ENCODE measurements at regions of chr3 and their contacts with region 1.

Region 1: DNA sequence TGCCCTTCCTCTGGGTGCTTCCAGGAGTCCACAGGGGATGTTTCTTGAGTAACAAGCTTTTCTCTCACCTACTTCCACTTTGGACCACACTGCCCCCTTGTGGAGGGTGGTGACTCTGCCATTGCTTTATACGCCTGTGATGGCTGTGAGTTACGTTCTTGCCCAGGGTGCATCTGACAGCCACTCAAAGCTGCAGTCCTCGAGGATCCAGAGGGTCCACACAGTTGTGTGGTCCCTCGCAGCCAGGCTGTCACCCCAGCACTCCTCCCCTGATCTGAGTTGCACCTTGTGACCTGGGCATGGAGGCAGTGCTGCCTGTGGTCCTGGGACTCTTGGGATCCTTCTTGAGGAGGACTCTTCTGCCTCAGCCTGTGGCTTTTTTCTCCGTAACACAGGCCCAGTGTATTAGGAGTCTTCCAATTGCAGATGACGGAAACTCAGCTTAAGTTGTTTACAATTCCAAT is 23.4 kb downstream of the FOXL2 start:
- DNase-seq: peak; percentile 82
- CTCF ChIP-seq: peak; percentile 82

Region 2: GRCh38 chr3:138417559-138417982 is 506.0 kb before region 1 on chr3:
- CTCF ChIA-PET with region 1: interaction called, 81 read pairs
- POLR2A ChIA-PET with region 1: no interaction called
- DNase-seq: peak; percentile 80
- CTCF ChIP-seq: peak; percentile 91

Region 3: DNA sequence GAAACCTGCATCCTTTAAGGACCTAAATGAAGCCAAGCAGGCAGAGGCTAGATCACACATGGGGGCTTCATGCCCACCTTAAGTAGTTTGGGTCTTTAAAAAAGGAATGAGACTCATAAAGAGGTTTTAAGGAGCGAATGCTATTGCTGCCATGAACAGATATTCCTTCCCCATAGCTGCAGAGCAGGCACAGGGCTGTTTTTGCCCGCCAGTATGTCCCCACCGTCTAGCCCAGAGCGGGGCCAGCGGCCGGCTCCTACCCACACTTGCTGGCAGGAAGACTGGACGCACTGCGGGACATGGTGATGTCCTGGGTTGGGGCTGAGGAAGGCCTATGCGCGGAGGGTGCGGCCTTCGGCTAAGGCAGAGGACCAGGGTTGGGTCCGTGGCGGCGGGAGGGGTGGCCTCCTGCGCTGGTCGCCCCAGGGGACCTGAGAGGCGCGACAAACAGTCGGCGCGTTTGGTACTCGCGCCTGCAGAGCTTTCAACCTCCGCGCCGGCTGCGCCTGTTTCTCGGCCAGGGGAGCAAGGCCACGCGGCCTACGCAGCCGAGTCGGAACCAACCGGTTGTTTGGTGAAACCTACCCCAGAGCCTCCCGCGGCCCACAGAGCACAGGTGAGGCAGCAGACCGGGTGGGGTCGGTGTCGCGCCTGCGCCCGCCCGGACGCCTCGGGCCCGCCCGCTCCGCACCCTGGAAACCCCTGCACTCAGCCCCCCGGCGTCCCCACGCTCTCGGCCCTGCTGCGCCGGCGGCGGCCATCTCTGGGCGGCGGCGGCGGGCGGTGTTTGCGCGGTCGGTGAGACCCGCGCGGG is 315.0 kb before region 1 on chr3 and contains the start of gene FAIM:
- CTCF ChIA-PET with region 1: interaction called, 11 read pairs
- POLR2A ChIA-PET with region 1: no interaction called
- DNase-seq: peak; percentile 66
- CTCF ChIP-seq: no peak

Region 4: DNA sequence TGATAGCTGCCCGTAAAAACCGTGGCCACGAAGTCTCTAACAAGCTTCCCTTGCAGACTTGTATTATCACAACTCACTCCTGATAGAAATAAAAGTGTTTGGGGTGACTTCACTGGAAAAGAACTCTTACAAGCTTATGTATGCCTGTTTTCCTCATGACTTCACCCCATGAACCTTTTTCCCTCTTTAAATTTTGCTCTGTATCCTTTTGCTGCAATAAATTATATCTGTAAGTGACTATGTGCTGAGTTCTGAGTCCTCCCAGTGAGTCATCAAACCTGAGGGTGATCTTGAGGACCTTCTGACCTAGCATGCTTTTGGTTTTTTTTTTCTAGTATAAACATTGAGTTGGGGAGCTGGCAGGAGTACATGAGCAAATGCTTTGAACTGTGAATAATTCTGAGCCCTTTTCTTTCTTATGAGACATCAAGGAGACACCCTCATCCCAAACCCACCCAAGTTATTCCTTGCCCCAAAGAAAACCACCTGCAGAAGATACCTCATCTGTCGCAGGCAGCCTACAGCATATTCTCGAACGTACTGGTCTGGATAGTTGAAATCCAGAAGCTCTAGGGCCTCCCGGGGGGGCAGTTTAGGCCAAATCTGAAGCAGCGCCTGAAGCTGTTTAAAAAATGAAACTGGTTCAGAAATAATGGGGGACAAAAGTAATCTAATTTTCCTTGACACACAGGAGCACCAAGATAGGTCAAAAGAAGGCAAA is 229.1 kb before region 1 on chr3:
- CTCF ChIA-PET with region 1: interaction called, 433 read pairs
- POLR2A ChIA-PET with region 1: no interaction called
- DNase-seq: no peak
- CTCF ChIP-seq: no peak

Region 5: GRCh38 chr3:138898301-138898700 is 25.3 kb before region 1 on chr3:
- CTCF ChIA-PET with region 1: interaction called, 33 read pairs
- POLR2A ChIA-PET with region 1: no interaction called
- DNase-seq: no peak
- CTCF ChIP-seq: no peak

Region 6: DNA sequence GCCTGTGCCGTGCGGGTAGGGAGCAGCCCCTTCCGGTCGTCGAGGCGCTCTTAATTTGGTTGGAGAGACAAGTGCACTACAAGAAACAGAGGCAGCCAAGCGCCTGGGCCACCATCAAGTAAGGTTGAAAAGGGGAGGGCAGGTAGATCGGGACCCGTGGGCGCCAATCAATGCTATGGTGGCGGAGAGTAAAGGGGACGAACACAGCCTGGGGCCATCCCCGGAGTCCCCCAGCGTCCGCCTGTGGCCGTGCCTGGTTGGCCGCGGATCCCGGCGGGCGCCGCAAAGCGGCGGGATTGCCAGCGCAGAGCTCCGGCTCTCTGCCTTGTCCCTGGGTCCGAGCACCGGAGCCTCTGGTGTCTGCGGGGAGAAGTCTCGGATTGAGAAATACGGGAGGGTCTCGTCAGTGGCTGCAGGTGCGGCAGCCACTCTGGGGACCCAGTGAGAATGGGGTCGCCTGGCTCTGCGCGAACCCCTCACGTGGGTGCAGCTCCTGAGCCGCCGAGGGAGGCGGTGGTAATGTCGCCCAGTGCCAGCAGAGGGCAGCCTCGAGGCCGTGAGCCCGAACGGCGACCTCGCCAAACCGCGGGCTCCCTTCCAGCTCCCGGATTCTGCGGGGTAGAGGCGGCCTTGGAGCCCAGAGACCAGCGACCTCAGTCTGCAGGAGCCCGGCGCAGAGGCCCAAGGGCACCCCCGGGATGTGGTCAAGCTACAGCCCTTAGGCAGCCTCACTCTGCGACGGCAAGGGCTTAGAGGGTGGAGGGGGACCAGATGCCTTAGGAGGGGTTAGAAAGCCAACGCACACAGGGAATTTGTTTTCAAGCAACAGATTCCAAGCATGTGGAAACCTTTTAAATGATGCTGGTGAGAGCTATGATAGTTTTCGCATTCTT is 12.5 kb after region 1 on chr3:
- CTCF ChIA-PET with region 1: interaction called, 178 read pairs
- POLR2A ChIA-PET with region 1: interaction called, 4 read pairs
- DNase-seq: peak; percentile 87
- CTCF ChIP-seq: peak; percentile 92

Region 7: DNA sequence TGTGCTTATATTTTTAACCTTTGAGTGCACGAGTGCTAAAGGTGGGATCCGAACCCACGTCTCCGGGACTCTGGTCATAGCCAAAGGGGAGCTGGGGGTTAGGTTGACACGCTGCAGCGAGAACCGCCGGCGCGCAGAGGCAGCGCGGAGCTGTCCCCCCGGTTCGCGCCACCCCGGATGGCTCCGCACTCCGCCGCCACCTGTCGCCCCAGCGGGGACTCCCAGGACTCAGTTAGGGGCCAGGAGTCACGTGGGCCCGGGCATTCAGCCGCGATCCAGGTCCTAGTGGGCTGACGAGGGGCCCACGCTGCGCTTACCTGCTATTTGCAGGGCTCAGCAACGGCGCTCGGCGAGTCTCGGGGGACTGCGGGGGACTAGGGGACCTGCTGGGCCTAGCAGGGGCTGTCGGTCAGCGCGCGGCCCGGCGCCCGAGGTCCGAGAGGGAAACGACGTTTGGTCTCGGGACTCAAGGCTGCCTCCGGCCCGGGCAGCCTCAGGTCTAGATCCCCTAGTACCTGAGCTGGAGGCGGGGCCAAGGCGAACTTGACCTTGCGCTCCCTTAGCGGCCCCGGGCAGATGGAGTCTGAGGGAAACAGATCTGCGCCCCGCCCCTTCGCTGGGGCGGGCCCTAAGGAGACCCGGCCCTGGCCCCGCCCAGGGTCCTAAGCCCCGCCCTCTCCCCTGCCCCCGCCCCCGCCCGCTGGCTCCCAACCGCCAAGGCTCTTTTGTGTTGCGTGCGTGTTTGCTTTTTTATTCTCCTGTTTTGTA is 754.0 kb after region 1 on chr3 and contains the start of gene NMNAT3:
- CTCF ChIA-PET with region 1: no interaction called
- POLR2A ChIA-PET with region 1: no interaction called
- DNase-seq: peak; percentile 89
- CTCF ChIP-seq: no peak